H1 (cell line): ENCODE measurements at regions of chr19 and their contacts with region 1.

Region 1: GRCh38 chr19:39846176-39846677 is at the start of gene FBL:
- DNase-seq: peak; percentile 57 to 98
- H3K4me3 ChIP-seq: peak within 1 kb of the TSS; percentile 91 to 99 (median 96)
- H3K27ac ChIP-seq: peak within 1 kb of the TSS; percentile 65
- H3K4me1 ChIP-seq: peaks cover 7 to 28% (median 18%) of the 10 kb centered on the region in 4 experiments
- H3K27me3 ChIP-seq: no peaks in the 10 kb centered on the region
- CTCF ChIP-seq: no peak
- EP300 ChIP-seq: no peak
- POLR2A ChIP-seq: peak in 1 of 2 experiments; percentile 34; a peak in 1 of 3 replicates
- RAD21 ChIP-seq: no peak
- total RNA-seq, gene FBL: 790 and 809 TPM in 2 replicates

Region 2: GRCh38 chr19:39778763-39779162 is 67.5 kb before region 1 on chr19 and contains the start of gene LEUTX:
- CTCF ChIA-PET with region 1: interaction called, 10 read pairs
- POLR2A ChIA-PET with region 1: no interaction called
- DNase-seq: no peak
- H3K4me3 ChIP-seq: no peak within 1 kb of the TSS
- H3K27ac ChIP-seq: no peak within 1 kb of the TSS
- H3K4me1 ChIP-seq: no peaks in the 10 kb centered on the region
- H3K27me3 ChIP-seq: no peaks in the 10 kb centered on the region
- CTCF ChIP-seq: no peak
- EP300 ChIP-seq: no peak
- POLR2A ChIP-seq: no peak
- RAD21 ChIP-seq: no peak
- total RNA-seq, gene LEUTX: not detected in 2 replicates

Region 3: DNA sequence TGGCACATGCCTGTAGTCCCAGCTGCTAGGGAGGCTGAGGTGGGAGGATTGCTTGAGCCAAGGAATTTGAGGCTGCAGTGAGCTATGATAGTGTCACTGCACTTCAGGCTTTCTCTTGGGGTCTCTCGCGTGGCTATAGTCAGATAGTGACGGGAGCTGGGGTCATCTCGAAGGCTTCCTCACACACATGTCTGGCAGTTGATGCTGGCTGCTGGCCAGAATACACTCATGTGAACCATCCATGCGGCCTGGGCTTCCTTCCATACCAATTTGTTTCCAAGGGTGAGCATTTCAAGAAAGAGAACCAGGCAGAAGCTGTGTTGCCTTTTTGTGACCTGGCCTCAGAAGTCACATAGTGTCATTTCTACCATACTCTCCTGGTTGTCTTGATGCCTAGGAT is 41.1 kb before region 1 on chr19:
- CTCF ChIA-PET with region 1: interaction called, 14 read pairs
- POLR2A ChIA-PET with region 1: interaction called, 3 read pairs
- DNase-seq: no peak
- H3K4me3 ChIP-seq: no peak overlapping the region
- H3K27ac ChIP-seq: no peak overlapping the region
- H3K4me1 ChIP-seq: peaks cover 0 to 8% (median 0%) of the 10 kb centered on the region in 4 experiments; a peak in 4 of 7 replicates
- H3K27me3 ChIP-seq: peaks cover 0 to 2% (median 0%) of the 10 kb centered on the region in 4 experiments; a peak in 1 of 7 replicates
- CTCF ChIP-seq: no peak
- EP300 ChIP-seq: no peak
- POLR2A ChIP-seq: no peak
- RAD21 ChIP-seq: no peak

Region 4: DNA sequence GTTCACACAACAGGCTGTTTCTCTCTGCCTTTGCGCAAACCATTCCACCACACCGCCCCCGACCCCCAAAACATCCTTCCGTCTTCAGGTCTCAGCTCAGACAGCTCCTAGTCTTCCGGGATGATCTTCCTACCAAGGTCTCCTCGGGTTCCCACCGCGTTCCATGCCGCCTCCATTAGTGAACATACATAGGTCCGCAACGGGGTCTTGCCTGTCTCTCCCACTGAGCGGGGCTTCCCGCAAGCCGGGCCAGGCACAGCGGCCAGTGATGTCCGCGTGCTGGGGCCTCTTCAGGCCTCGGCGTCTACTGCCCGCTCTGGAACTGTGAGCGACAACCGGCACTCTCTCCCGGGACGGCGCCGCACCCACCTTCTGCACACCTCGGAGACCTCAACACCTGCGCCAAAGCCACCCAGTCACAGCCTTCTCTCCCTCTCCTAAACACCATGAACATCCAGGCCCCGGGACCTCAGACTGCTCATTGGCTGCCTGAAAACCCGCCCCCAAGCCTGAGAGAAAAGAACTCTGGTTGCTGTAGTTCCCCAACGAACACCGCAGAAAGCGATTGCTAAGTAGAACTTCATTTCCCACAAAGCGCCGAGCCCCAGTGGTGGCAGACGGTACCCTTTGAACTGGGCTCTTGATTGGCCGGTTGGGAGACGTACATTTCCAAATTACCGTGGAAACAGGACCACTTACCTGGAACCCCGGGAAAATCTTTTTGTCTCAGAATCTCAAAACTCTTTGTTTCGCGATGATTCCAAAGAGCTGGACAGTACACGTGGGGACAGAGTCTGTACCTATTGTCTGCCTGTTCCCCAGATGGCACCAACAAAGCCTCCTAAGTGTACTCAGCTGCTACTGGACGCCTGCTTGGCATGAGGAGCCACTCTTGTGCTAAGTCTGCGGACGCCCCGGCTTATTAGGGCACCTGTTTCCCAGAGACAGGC is 21.8 kb before region 1 on chr19:
- CTCF ChIA-PET with region 1: interaction called, 22 read pairs
- POLR2A ChIA-PET with region 1: interaction called, 10 read pairs
- DNase-seq: peak; percentile 75 to 86
- H3K4me3 ChIP-seq: peak overlapping the region; percentile 72 to 95 (median 89)
- H3K27ac ChIP-seq: peak overlapping the region; percentile 54
- H3K4me1 ChIP-seq: peaks cover 0 to 8% (median 3%) of the 10 kb centered on the region in 4 experiments; a peak in 4 of 7 replicates
- H3K27me3 ChIP-seq: no peaks in the 10 kb centered on the region
- CTCF ChIP-seq: no peak
- EP300 ChIP-seq: no peak
- POLR2A ChIP-seq: peak; percentile 22 to 75; a peak in 2 of 3 replicates
- RAD21 ChIP-seq: no peak

Region 5: GRCh38 chr19:39858541-39858940 is 12.3 kb after region 1 on chr19:
- CTCF ChIA-PET with region 1: interaction called, 15 read pairs
- POLR2A ChIA-PET with region 1: interaction called, 3 read pairs
- DNase-seq: no peak
- H3K4me3 ChIP-seq: no peak overlapping the region; a peak in 1 of 8 replicates
- H3K27ac ChIP-seq: no peak overlapping the region
- H3K4me1 ChIP-seq: no peaks in the 10 kb centered on the region
- H3K27me3 ChIP-seq: peaks cover 0 to 2% (median 0%) of the 10 kb centered on the region in 4 experiments; a peak in 1 of 7 replicates
- CTCF ChIP-seq: no peak
- EP300 ChIP-seq: no peak
- POLR2A ChIP-seq: no peak
- RAD21 ChIP-seq: no peak

Region 6: GRCh38 chr19:39906820-39907611 is 60.8 kb after region 1 on chr19:
- CTCF ChIA-PET with region 1: no interaction called
- POLR2A ChIA-PET with region 1: no interaction called
- DNase-seq: no peak
- H3K4me3 ChIP-seq: no peak overlapping the region
- H3K27ac ChIP-seq: no peak overlapping the region
- H3K4me1 ChIP-seq: no peaks in the 10 kb centered on the region
- H3K27me3 ChIP-seq: no peaks in the 10 kb centered on the region
- CTCF ChIP-seq: no peak
- EP300 ChIP-seq: no peak
- POLR2A ChIP-seq: no peak
- RAD21 ChIP-seq: no peak